ENCODE measurements at regions of chr20 and their contacts with region 1.

Region 1: GRCh38 chr20:37384683-37385174 is 38.8 kb downstream of the SRC start:
- DNase-seq: peak; percentile 86
- ATAC-seq: peak; percentile 80

Region 2: DNA sequence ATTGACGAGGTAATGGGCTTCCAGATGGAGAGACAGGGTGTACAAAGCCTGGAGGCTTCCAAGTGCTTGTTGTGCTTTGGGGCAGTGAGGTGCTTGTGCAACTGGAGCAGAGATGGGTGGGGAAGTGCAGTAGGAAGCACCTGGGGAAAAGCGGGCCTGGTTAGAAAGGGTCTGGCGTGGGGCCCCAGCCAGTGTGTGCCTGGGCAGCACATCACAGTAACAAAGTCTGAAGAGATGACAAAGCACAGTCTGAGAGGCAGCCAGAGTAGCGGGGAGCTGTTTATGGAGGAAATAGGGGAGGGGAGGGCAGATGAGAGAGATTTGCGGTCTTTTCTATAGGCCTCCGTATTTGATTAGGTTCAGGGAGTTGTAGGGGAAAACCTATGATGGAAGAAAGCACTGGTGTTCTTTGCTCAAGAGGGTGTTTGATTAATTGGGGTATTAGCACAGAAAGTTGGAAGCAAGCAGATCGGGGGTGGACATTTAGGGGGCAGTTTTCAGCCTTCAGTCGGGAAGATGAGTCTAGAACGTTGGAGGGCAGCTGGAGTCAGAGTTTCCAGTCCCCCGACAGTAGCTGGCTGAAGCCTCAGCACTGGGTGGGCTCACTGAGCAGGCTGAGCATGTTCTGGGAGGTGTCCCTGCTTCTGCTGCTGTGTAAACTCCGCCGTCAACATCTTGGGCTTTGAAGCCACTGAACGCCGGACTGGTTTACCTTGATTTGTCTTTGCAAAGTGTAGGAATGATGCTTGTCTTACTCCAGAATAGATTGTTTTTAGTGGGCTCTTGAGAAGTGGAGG is 189.9 kb before region 1 on chr20:
- intact Hi-C with region 1: loop called (anchors 2 kb)
- DNase-seq: no peak
- ATAC-seq: no peak

Region 3: GRCh38 chr20:37270576-37271420 is 113.9 kb before region 1 on chr20:
- intact Hi-C with region 1: loop called (anchors 1 kb)
- DNase-seq: no peak
- ATAC-seq: peak; percentile 45

Region 4: GRCh38 chr20:37288091-37288490 is 96.6 kb before region 1 on chr20:
- intact Hi-C with region 1: loop called (anchors 5 kb)
- DNase-seq: no peak
- ATAC-seq: peak; percentile 38

Region 5: DNA sequence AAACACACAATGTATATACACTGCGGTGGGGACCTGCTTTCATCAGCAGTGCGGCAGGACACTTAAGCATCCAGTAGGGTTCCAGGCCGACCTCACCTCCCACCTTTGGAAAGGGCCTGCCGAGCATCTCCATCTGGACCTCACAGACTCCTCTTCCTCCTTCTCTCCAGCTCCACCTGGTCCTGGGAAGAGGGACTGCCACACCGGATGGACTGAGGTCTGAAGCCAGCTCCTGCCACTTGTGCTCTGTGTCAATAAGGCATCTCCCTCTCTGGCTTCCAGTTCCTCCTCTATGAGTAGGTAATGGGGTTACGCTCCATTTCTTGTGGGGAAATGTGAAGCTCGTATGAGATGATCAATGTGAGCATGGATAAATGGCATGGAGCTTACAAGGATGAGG is 117.2 kb after region 1 on chr20:
- intact Hi-C with region 1: no loop called
- DNase-seq: no peak
- ATAC-seq: no peak

Region 6: GRCh38 chr20:37534401-37535157 is 149.8 kb after region 1 on chr20:
- intact Hi-C with region 1: loop called (anchors 5 kb)
- DNase-seq: no peak
- ATAC-seq: peak; percentile 84

Measured in Right ventricle myocardium inferior (tissue), 1 donor.